ENCODE measurements at regions of chr1 and their contacts with region 1.

Region 1: DNA sequence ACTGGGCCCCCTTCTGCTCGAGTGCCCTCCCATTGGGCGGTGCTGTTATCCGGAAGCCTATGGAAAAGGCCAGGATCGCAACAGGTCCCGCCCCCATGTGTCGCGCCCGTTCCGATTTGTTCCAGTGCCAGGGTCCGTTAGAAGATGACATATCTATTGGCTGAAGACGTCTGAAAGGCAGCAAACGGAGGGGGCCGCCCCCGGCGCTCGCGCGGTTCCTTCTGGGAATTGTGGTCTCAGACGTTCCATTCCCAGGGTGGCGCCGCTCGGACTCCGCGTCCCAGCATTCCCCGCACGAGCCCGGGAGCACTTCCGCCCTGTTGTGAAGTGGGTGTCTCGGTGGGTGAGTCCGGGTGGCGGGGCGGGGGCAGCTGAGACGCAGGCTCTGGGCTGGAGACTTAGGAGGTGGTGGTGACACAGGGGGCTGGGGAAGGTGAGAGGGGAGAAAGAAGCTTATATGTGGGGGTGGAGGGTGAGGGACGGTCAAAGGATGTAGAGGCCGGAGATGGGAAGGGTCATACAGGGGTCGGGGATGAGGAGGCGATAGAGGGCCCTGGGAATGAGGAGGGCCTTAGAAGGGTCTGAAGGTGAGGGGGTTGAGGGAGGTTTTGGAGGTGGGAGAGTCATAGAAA is at the start of gene ZSCAN20:
- ATAC-seq: peak; percentile 88 to 98 (median 95)
- H3K4me3 ChIP-seq: peak within 1 kb of the TSS; percentile 49 to 68 (median 49)
- H3K27ac ChIP-seq: peak within 1 kb of the TSS; percentile 53 to 78
- H3K4me1 ChIP-seq: peaks cover 16 to 19% of the 10 kb centered on the region in 2 donors
- total RNA-seq, gene ZSCAN20: 5.0 to 12.2 (median 8.5) TPM

Region 2: DNA sequence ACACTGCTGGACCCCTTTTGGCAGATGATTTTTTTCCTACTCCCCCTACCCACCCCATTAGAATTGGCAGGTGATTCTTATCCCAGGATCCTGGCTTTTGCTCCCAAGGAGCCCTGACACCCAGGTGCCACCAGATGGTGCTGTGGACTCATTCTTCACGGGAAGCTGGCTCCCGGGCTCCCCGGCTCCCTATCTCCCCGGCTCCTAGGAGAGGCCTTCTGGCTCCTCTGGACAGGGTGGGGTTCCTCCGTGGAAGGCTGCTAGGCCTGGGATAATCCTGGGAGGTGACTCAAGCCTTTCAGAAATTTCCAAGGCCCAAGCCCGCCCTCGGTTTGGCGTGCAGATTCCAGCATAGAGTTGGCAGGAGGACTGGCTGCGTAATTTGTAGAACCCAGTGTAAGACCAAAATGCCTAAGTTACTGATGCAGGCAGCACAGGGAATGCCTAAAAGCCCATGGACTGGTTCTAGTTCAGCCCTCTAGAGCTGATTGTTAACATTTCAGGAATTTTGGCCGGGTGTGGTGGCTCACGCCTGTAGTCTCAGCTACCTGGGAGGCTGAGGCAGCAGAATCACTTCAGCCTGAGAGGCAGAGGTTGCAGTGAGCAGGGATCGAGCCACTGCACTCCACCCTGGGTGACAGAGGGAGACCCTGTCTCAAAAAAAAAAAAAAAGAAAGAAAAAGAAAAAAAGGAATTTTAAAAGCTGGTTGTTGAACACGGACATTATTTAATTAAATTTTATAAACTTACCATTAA is 1071.4 kb before region 1 on chr1:
- in situ Hi-C with region 1: loop called in 1 of 9 experiments (anchors 25 kb)
- ATAC-seq: peak; percentile 97 to 99 (median 98)
- H3K4me3 ChIP-seq: no peak overlapping the region
- H3K27ac ChIP-seq: no peak overlapping the region
- H3K4me1 ChIP-seq: peaks cover under 1 to 2% of the 10 kb centered on the region in 2 donors

Region 3: DNA sequence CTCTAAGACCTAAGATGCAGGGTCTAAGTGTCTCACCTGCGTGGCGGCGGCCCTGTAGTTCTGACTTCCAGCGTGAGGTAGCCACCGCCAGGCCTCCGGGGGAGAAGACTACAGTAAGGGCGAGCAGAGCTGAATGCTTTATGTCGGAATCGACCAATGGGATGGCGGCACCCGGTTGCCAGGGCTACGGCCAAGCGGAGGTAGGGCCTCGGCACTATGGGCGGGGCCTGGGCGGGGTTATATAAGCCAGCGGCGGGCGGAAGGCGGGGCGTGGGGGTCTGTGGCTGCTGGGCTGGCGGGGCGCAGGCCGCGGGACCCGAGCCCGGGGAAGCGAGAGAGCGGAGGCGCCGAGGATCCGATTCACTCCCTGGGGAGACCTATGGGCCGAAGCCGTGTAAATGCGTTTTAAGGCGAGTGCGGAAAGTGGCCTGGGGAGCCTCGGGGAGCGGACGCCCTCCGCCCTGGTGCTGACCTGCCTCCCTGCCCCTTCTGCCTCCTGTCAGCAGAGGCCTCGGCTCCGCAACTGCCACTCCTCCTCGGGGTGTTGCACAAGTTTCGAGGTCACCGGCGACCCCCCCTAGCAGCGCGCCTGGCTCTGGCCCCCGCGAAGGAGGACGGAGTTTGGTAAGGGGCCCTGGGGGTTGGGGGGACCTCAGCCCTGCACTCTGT is 391.4 kb before region 1 on chr1 and contains the start of gene AZIN2:
- in situ Hi-C with region 1: loop called in 1 of 9 experiments (anchors 25 kb)
- ATAC-seq: peak; percentile 96 to 99 (median 98)
- H3K4me3 ChIP-seq: peak within 1 kb of the TSS; percentile 44 to 58 (median 52)
- H3K27ac ChIP-seq: no peak within 1 kb of the TSS
- H3K4me1 ChIP-seq: peaks cover 10 to 12% of the 10 kb centered on the region in 2 donors
- total RNA-seq, gene AZIN2: 4.7 to 15.5 (median 11.6) TPM

Region 4: GRCh38 chr1:33127001-33127791 is 345.3 kb before region 1 on chr1:
- in situ Hi-C with region 1: loop called in 3 of 9 experiments (anchors 25 kb)
- ATAC-seq: peak; percentile 33 to 99 (median 96)
- H3K4me3 ChIP-seq: peak overlapping the region in 4 of 5 donors; percentile 5 to 81 (median 28)
- H3K27ac ChIP-seq: no peak overlapping the region
- H3K4me1 ChIP-seq: no peaks in the 10 kb centered on the region

Region 5: DNA sequence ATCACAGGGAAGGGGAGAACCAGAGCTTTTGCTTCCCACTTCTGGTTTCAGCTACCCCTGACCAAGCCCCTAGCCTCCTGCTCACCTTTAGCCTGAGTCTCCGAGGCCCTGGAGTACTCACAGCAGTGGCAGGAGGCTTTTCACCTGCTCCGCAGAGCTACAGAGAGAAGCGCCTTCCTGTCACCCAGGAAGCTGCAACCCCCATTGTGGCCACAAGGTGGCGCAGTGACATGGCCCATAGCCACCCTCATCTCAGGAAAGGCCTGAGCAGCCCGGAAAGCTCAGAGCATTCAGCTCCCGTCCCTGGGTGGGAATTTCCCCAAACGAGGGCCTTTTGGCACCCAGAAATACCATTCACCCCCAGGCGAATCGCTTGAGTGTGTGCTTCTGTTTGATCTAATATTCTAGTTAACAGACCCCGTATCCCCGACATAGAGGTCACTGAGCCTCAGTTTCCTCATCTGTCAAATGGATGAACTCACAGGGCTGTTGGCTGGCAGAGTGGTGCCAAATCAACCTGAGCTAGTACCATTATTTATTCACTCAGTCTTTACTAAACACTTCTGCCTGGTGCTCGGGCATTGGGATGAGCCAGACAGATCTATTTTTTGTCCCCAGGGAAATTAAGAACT is 176.9 kb before region 1 on chr1:
- in situ Hi-C with region 1: loop called in 4 of 9 experiments (anchors 25 kb)
- ATAC-seq: peak; percentile 82 to 93 (median 91)
- H3K4me3 ChIP-seq: no peak overlapping the region
- H3K27ac ChIP-seq: no peak overlapping the region
- H3K4me1 ChIP-seq: no peaks in the 10 kb centered on the region